Stomach (tissue), 19 donors: ENCODE measurements at regions of chr19 and their contacts with region 1.

Region 1: DNA sequence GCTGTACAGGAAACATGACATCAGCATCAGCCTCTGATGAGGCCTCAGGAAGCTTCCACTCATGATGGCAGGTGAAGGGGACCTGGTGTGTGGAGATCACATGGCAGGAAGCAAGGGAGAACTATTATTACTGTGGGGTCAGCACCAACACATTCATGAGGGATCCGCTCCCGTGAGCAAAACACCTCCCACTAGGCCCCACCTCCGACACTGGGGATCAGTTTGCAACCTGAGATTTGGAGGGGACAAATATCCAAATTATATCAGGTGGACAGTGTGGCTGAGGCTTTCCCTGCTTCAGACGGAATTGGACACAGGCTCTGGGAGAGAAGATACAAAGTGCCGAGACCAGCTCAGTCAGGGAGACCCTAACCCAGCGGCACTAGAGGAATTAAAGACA is 5.7 kb upstream of the ZNF792 start:
- DNase-seq: no peak
- H3K4me3 ChIP-seq: no peak overlapping the region
- H3K27ac ChIP-seq: no peak overlapping the region
- H3K4me1 ChIP-seq: peaks cover 0 to 18% (median 13%) of the 10 kb centered on the region in 4 donors
- H3K27me3 ChIP-seq: no peaks in the 10 kb centered on the region
- CTCF ChIP-seq: no peak
- EP300 ChIP-seq: no peak
- POLR2A ChIP-seq: no peak

Region 2: DNA sequence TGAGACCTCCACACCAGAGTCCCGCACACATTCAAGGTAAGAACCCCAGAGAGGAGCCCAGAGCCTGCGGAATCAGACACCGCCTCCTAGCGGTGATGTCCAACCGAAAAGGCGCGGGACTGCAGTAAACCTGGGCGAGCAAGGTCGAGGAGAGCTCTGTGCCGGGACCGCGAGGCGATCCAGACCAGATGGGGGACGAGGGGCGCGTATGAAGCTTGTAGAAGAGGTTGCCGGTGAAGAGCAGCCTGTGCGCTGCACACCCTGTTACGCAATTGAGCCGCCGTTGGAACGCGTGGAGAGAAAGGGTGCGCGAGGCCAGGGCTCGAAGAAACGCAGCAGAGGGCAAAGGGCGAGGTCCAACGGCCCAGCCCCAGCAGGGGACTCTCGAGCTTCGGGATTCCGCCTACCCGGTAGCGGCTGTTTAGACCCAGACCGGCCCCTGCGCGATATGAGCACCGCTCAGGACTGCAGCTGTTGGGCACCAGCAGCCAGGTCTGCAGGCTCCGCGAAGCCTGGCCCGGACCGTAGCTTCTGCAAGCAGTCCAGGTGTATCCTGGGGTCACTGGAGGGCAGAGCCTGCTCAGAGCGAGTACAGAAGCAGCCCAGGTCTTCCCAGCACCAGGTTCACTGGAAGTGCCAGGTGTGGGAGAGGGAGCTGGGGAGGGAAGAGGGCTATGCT is 130.8 kb before region 1 on chr19:
- intact Hi-C with region 1: no loop called
- DNase-seq: peak; percentile 25 to 65
- H3K4me3 ChIP-seq: peak overlapping the region in 3 of 4 donors; percentile 11 to 32 (median 13)
- H3K27ac ChIP-seq: no peak overlapping the region
- H3K4me1 ChIP-seq: peaks cover 0 to 12% (median 9%) of the 10 kb centered on the region in 4 donors
- H3K27me3 ChIP-seq: peaks cover 0 to 31% (median 0%) of the 10 kb centered on the region in 3 donors
- CTCF ChIP-seq: no peak
- EP300 ChIP-seq: no peak
- POLR2A ChIP-seq: no peak

Region 3: GRCh38 chr19:34910770-34911169 is 59.0 kb before region 1 on chr19:
- intact Hi-C with region 1: no loop called
- DNase-seq: no peak
- H3K4me3 ChIP-seq: no peak overlapping the region
- H3K27ac ChIP-seq: no peak overlapping the region
- H3K4me1 ChIP-seq: no peaks in the 10 kb centered on the region
- H3K27me3 ChIP-seq: peaks cover 0 to 33% (median 9%) of the 10 kb centered on the region in 3 donors
- CTCF ChIP-seq: no peak
- EP300 ChIP-seq: no peak
- POLR2A ChIP-seq: no peak

Region 4: GRCh38 chr19:35013031-35013819 is 43.5 kb after region 1 on chr19:
- intact Hi-C with region 1: loop called (anchors 2 kb)
- DNase-seq: peak; percentile 83 to 90
- H3K4me3 ChIP-seq: no peak overlapping the region
- H3K27ac ChIP-seq: peak overlapping the region in 4 of 5 donors; percentile 16 to 66 (median 56)
- H3K4me1 ChIP-seq: peaks cover 16 to 62% (median 30%) of the 10 kb centered on the region in 4 donors
- H3K27me3 ChIP-seq: no peaks in the 10 kb centered on the region
- CTCF ChIP-seq: peak in 6 of 7 experiments; percentile 78 to 100 (median 99)
- EP300 ChIP-seq: no peak
- POLR2A ChIP-seq: no peak

Region 5: GRCh38 chr19:35040826-35041547 is 71.3 kb after region 1 on chr19:
- intact Hi-C with region 1: no loop called
- DNase-seq: peak; percentile 89 to 96
- H3K4me3 ChIP-seq: peak overlapping the region; percentile 18 to 41 (median 22)
- H3K27ac ChIP-seq: peak overlapping the region; percentile 79 to 92 (median 86)
- H3K4me1 ChIP-seq: peaks cover 30 to 87% (median 58%) of the 10 kb centered on the region in 4 donors
- H3K27me3 ChIP-seq: peaks cover 0 to 33% (median 0%) of the 10 kb centered on the region in 3 donors
- CTCF ChIP-seq: no peak
- EP300 ChIP-seq: peak; percentile 16
- POLR2A ChIP-seq: no peak